Endothelial cell of umbilical vein (primary cell): ENCODE measurements at regions of chr2 and their contacts with region 1.

Region 1: DNA sequence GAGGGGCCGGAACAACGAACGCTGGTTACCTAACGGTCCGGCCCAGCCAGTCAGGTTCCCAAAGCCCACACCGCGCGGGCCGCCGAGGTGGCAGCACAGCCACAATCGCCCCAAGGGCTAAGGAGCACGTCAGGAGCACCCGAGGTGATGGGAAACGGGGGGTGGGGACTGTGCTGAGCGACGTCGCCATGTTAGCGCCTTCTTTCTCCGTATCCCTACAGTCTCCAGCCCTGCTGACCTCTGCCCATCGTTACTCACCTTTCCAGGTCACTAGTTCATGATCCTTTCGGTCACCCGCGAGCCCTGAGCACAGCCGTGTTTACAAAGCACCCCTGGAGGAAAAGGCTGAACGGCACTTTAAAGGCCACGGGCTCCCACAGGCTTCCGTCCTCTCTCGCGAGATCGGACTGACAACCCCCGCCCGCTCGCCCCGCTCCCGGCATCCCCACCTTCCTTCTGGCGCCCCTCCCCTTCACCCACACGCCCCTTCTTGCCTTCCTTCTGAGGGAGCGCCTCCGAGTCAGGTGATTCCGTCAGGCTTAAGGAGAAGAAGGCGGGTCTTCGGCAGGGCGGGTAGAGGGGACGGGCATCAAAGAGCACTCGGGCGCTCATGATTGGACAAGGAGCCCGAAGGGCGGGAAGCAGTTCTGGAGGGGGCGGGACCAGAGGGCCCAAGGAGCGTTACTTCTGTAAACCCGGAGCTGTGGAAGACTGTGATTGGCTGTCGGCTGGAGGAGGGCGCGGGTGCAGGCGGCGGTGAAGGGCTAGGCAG is at the start of gene ATF2:
- DNase-seq: peak; percentile 100
- H3K4me3 ChIP-seq: peak within 1 kb of the TSS; percentile 86 to 99 (median 90)
- H3K27ac ChIP-seq: peak within 1 kb of the TSS; percentile 93
- H3K4me1 ChIP-seq: peaks cover 11% of the 10 kb centered on the region
- H3K27me3 ChIP-seq: no peaks in the 10 kb centered on the region
- CTCF ChIP-seq: no peak
- POLR2A ChIP-seq: peak; percentile 64
- total RNA-seq, gene ATF2: 55.9 and 57.1 TPM in 2 replicates

Region 2: GRCh38 chr2:174487108-174487819 is 680.7 kb before region 1 on chr2:
- CTCF ChIA-PET with region 1: no interaction called
- POLR2A ChIA-PET with region 1: no interaction called
- dilution Hi-C with region 1: no loop called
- intact Hi-C with region 1: loop called (anchors 5 kb)
- DNase-seq: peak; percentile 98
- H3K4me3 ChIP-seq: peak overlapping the region; percentile 64 to 94 (median 84)
- H3K27ac ChIP-seq: peak overlapping the region; percentile 81
- H3K4me1 ChIP-seq: peaks cover 10% of the 10 kb centered on the region
- H3K27me3 ChIP-seq: peaks cover 1 to 4% of the 10 kb centered on the region in 2 experiments
- CTCF ChIP-seq: no peak
- POLR2A ChIP-seq: peak; percentile 86

Region 3: GRCh38 chr2:175181104-175181876 is 13.3 kb after region 1 on chr2 and contains the start of gene ATP5MC3:
- CTCF ChIA-PET with region 1: interaction called, 4 read pairs
- POLR2A ChIA-PET with region 1: interaction called, 4 read pairs
- dilution Hi-C with region 1: no loop called
- intact Hi-C with region 1: loop called (anchors 1 kb)
- DNase-seq: peak; percentile 86
- H3K4me3 ChIP-seq: peak within 1 kb of the TSS; percentile 49 to 74 (median 69)
- H3K27ac ChIP-seq: peak within 1 kb of the TSS; percentile 48
- H3K4me1 ChIP-seq: peaks cover 6% of the 10 kb centered on the region
- H3K27me3 ChIP-seq: no peaks in the 10 kb centered on the region
- CTCF ChIP-seq: peak in 1 of 2 donors; percentile 25
- POLR2A ChIP-seq: peak; percentile 66
- total RNA-seq, gene ATP5MC3: 201 and 233 TPM in 2 replicates

Region 4: GRCh38 chr2:176494949-176495353 is 1327.0 kb after region 1 on chr2:
- CTCF ChIA-PET with region 1: no interaction called
- POLR2A ChIA-PET with region 1: no interaction called
- dilution Hi-C with region 1: no loop called
- intact Hi-C with region 1: no loop called
- DNase-seq: no peak
- H3K4me3 ChIP-seq: no peak overlapping the region
- H3K27ac ChIP-seq: no peak overlapping the region
- H3K4me1 ChIP-seq: no peaks in the 10 kb centered on the region
- H3K27me3 ChIP-seq: no peaks in the 10 kb centered on the region
- CTCF ChIP-seq: no peak
- POLR2A ChIP-seq: no peak